ENCODE measurements at regions of chr2 and their contacts with region 1.

Region 1: DNA sequence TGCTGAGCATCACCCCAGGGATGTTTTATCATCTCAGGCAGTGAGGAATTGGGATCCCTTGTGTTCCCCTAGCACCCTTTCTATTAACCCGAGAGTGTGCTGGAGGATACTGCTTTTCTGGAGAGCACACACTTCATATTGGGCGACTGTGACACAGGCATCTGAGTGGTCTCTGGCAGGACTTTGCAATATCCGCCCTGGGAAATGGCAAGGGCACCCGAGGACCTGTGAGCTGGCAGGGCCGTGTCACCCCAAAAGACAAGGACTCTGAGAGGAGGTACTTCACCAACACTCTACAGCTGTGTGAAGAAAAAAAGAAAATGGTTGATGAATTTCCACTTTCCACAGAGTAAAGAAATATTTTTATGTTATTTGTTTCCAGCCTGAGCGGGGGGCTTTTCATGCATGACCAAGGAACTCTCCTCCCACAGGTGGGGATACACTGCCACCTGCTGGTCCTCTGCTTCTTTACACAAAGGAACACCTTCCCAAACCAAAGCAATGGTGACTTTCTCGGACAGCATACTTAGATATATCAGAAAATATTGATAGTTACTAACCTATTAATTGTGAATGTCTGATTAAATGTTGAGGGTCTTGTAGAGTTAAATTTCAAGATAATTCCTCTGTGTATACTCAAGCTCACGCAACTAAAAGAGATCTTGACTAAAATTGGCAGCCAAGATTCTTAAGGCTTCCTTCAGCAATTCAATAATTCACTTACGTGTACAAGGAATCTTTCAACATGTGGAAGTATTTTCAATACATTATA is 45.9 kb upstream of the REG3G start:
- DNase-seq: peak; percentile 54
- ATAC-seq: no peak
- H3K4me3 ChIP-seq: no peak overlapping the region
- H3K27ac ChIP-seq: no peak overlapping the region
- H3K4me1 ChIP-seq: no peaks in the 10 kb centered on the region
- H3K27me3 ChIP-seq: no peaks in the 10 kb centered on the region
- CTCF ChIP-seq: peak; percentile 84

Region 2: DNA sequence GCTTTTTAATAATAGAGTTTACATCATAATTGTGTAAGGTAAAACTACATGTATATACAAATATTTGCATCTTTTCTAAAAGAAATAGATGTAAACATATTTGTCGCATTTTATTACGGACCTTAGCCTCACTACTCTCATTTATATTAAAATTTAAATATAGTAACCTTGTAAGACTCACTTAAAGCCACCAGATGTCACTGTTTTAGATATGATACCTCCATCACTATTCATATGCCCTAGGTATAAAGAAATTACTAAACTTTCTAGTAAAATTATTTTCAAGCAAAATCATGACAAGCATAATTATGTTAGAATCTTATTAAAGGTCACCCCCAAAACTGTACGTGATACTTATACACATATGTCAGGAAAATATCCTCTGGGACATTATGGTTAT is 628.4 kb before region 1 on chr2:
- CTCF ChIA-PET with region 1: no interaction called
- POLR2A ChIA-PET with region 1: no interaction called
- intact Hi-C with region 1: loop called (anchors 5 kb)
- DNase-seq: peak; percentile 20
- ATAC-seq: no peak
- H3K4me3 ChIP-seq: no peak overlapping the region
- H3K27ac ChIP-seq: no peak overlapping the region
- H3K4me1 ChIP-seq: no peaks in the 10 kb centered on the region
- H3K27me3 ChIP-seq: no peaks in the 10 kb centered on the region
- CTCF ChIP-seq: peak; percentile 48

Region 3: DNA sequence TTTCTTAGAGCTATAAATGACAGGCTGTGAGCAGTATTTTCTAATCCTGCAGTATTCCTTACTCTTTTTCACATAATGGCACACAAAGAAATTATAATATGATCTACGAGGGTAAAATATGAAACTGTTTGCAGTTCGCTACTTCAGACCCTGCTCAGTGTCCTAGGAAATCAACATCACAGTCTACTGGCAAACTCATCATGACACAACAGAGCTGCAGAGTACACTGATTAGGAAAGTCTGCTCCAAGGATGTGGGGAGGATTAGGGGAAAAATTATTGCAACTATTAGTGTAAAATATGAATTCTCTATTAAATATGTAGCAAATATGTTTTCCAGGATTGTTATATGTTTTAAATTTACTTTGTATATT is 103.3 kb before region 1 on chr2:
- CTCF ChIA-PET with region 1: no interaction called
- POLR2A ChIA-PET with region 1: no interaction called
- intact Hi-C with region 1: no loop called
- DNase-seq: no peak
- ATAC-seq: no peak
- H3K4me3 ChIP-seq: no peak overlapping the region
- H3K27ac ChIP-seq: no peak overlapping the region
- H3K4me1 ChIP-seq: no peaks in the 10 kb centered on the region
- H3K27me3 ChIP-seq: no peaks in the 10 kb centered on the region
- CTCF ChIP-seq: no peak

Region 4: DNA sequence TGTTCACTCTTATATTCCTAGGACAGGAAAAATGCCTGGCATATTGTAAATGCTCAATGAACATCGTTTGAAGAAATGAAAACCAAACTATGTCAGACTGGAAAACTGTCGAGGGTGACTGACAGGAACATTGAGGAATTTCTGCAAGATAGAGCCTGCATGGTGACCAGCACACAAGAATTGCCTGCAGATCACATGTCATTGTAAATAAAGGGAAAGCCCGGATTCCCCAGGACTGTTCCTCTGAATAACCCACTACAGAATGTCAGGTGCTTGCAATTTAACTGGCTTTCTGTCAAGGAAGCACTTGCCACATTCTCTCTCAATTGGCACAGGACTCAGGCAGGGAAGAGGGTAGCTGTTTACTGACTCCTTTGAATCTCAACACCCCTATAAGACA is 83.0 kb before region 1 on chr2:
- CTCF ChIA-PET with region 1: no interaction called
- POLR2A ChIA-PET with region 1: no interaction called
- intact Hi-C with region 1: no loop called
- DNase-seq: no peak
- ATAC-seq: no peak
- H3K4me3 ChIP-seq: no peak overlapping the region
- H3K27ac ChIP-seq: no peak overlapping the region
- H3K4me1 ChIP-seq: no peaks in the 10 kb centered on the region
- H3K27me3 ChIP-seq: no peaks in the 10 kb centered on the region
- CTCF ChIP-seq: no peak